ENCODE measurements at regions of chr11 and their contacts with region 1.

Region 1: DNA sequence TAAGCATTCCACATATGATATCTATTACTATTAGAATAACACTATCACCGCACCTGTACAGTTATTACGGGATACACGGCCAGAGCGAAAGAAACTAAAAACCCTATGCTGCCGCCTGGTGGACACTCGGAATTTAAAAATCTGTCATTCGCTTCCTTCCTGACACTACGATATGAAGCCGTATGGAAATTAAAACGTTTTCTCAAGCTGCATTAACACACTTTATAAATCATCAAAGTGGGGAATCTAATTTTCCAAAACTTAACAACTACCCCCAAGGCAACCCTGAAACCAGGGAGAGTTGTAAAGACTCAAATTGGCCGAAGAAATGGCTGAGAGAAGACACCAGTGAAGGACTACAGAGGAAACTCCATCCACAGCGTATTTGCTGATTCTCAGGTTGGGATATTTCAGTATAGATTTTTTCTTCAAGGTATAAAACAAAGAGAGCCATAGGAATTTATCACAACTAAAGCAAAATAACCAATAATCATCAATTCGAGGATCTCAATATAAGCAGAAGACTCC is 1.4 kb downstream of the CCDC73 start:
- DNase-seq: peak; percentile 50 to 69
- H3K4me3 ChIP-seq: no peak overlapping the region
- H3K4me3 Mint-ChIP-seq: no peak overlapping the region
- H3K27ac Mint-ChIP-seq: no peak overlapping the region
- H3K4me1 ChIP-seq: no peaks in the 10 kb centered on the region
- H3K4me1 Mint-ChIP-seq: no peaks in the 10 kb centered on the region
- H3K27me3 ChIP-seq: no peaks in the 10 kb centered on the region
- H3K27me3 Mint-ChIP-seq: peaks cover 4% of the 10 kb centered on the region
- CTCF ChIP-seq: peak; percentile 67 to 78

Region 2: DNA sequence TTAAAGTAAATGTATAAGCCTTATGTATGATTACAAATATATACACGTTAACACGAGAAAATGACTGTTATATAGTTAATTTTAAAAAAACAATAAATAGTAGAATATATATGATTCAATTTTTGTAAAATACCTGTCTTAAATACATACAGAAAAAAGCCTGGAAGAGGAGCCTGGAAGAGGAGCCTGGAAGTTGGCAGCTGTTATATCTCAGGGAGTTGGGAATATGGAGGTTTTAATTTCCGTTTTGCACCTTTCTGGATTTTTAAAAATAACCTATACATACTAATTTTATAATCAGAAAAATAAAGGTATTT is 469.2 kb before region 1 on chr11:
- CTCF ChIA-PET with region 1: no interaction called
- POLR2A ChIA-PET with region 1: no interaction called
- intact Hi-C with region 1: loop called (anchors 1 kb)
- DNase-seq: no peak
- H3K4me3 ChIP-seq: no peak overlapping the region
- H3K4me3 Mint-ChIP-seq: no peak overlapping the region
- H3K27ac Mint-ChIP-seq: no peak overlapping the region
- H3K4me1 ChIP-seq: no peaks in the 10 kb centered on the region
- H3K4me1 Mint-ChIP-seq: no peaks in the 10 kb centered on the region
- H3K27me3 ChIP-seq: no peaks in the 10 kb centered on the region
- H3K27me3 Mint-ChIP-seq: peaks cover 6% of the 10 kb centered on the region
- CTCF ChIP-seq: peak in 1 of 2 experiments; percentile 16

Region 3: GRCh38 chr11:32385998-32386397 is 407.0 kb before region 1 on chr11:
- CTCF ChIA-PET with region 1: no interaction called
- POLR2A ChIA-PET with region 1: no interaction called
- intact Hi-C with region 1: loop called (anchors 5 kb)
- DNase-seq: peak; percentile 54
- H3K4me3 ChIP-seq: no peak overlapping the region
- H3K4me3 Mint-ChIP-seq: no peak overlapping the region
- H3K27ac Mint-ChIP-seq: no peak overlapping the region
- H3K4me1 ChIP-seq: no peaks in the 10 kb centered on the region
- H3K4me1 Mint-ChIP-seq: no peaks in the 10 kb centered on the region
- H3K27me3 ChIP-seq: peaks cover 1% of the 10 kb centered on the region
- H3K27me3 Mint-ChIP-seq: no peaks in the 10 kb centered on the region
- CTCF ChIP-seq: peak; percentile 54 to 84

Region 4: GRCh38 chr11:32583459-32584271 is 209.3 kb before region 1 on chr11 and contains the start of gene EIF3M:
- CTCF ChIA-PET with region 1: no interaction called
- POLR2A ChIA-PET with region 1: no interaction called
- intact Hi-C with region 1: loop called (anchors 10 kb)
- DNase-seq: peak; percentile 97 to 98
- H3K4me3 ChIP-seq: peak within 1 kb of the TSS; percentile 95
- H3K4me3 Mint-ChIP-seq: peak within 1 kb of the TSS; percentile 83
- H3K27ac Mint-ChIP-seq: peak within 1 kb of the TSS; percentile 93
- H3K4me1 ChIP-seq: peaks cover 23% of the 10 kb centered on the region
- H3K4me1 Mint-ChIP-seq: peaks cover 14% of the 10 kb centered on the region
- H3K27me3 ChIP-seq: no peaks in the 10 kb centered on the region
- H3K27me3 Mint-ChIP-seq: no peaks in the 10 kb centered on the region
- CTCF ChIP-seq: no peak
- total RNA-seq, gene EIF3M: 372 and 388 TPM in 2 replicates

Region 5: GRCh38 chr11:32615422-32615821 is 177.6 kb before region 1 on chr11:
- CTCF ChIA-PET with region 1: no interaction called
- POLR2A ChIA-PET with region 1: no interaction called
- intact Hi-C with region 1: loop called (anchors 10 kb)
- DNase-seq: no peak
- H3K4me3 ChIP-seq: no peak overlapping the region
- H3K4me3 Mint-ChIP-seq: no peak overlapping the region
- H3K27ac Mint-ChIP-seq: no peak overlapping the region
- H3K4me1 ChIP-seq: peaks cover 8% of the 10 kb centered on the region; the same call in 1 of the 2 replicates
- H3K4me1 Mint-ChIP-seq: peaks cover 14% of the 10 kb centered on the region
- H3K27me3 ChIP-seq: no peaks in the 10 kb centered on the region
- H3K27me3 Mint-ChIP-seq: no peaks in the 10 kb centered on the region
- CTCF ChIP-seq: peak in 1 of 2 experiments; percentile 29

Region 6: DNA sequence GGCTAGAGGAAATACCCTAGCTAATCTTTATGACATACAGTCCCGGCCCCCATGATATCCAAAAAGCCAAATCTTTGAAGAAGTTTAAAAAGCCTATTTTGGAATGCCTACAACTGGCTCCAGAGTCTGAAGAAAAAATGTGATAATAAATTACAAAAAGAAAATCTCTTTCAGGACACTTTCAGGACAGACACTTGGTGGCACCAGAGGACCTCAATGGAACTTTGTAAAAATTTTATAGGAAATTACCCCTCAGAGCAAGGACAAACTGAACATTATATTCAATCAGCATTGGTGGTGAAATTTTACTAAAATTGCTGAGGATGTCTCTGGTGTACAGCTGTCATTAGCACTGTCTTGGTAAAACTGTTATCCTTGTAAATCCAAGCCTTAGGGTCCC is 79.5 kb before region 1 on chr11:
- CTCF ChIA-PET with region 1: no interaction called
- POLR2A ChIA-PET with region 1: no interaction called
- intact Hi-C with region 1: loop called (anchors 1 kb)
- DNase-seq: peak in 1 of 2 experiments; percentile 17
- H3K4me3 ChIP-seq: no peak overlapping the region
- H3K4me3 Mint-ChIP-seq: no peak overlapping the region
- H3K27ac Mint-ChIP-seq: no peak overlapping the region
- H3K4me1 ChIP-seq: 0 out of 2 replicates have a peak, but pooled peaks cover 11% of the 10 kb centered on the region
- H3K4me1 Mint-ChIP-seq: peaks cover 10% of the 10 kb centered on the region
- H3K27me3 ChIP-seq: no peaks in the 10 kb centered on the region
- H3K27me3 Mint-ChIP-seq: no peaks in the 10 kb centered on the region
- CTCF ChIP-seq: peak; percentile 41 to 48

Region 7: GRCh38 chr11:32751381-32751780 is 41.6 kb before region 1 on chr11:
- CTCF ChIA-PET with region 1: no interaction called
- POLR2A ChIA-PET with region 1: no interaction called
- intact Hi-C with region 1: loop called (anchors 1 kb)
- DNase-seq: no peak
- H3K4me3 ChIP-seq: no peak overlapping the region
- H3K4me3 Mint-ChIP-seq: no peak overlapping the region
- H3K27ac Mint-ChIP-seq: no peak overlapping the region
- H3K4me1 ChIP-seq: no peaks in the 10 kb centered on the region
- H3K4me1 Mint-ChIP-seq: peaks cover 7% of the 10 kb centered on the region
- H3K27me3 ChIP-seq: no peaks in the 10 kb centered on the region
- H3K27me3 Mint-ChIP-seq: peaks cover 11% of the 10 kb centered on the region
- CTCF ChIP-seq: no peak

Region 8: GRCh38 chr11:32775908-32776307 is 17.1 kb before region 1 on chr11:
- CTCF ChIA-PET with region 1: no interaction called
- POLR2A ChIA-PET with region 1: no interaction called
- intact Hi-C with region 1: no loop called
- DNase-seq: no peak
- H3K4me3 ChIP-seq: no peak overlapping the region
- H3K4me3 Mint-ChIP-seq: no peak overlapping the region
- H3K27ac Mint-ChIP-seq: no peak overlapping the region
- H3K4me1 ChIP-seq: no peaks in the 10 kb centered on the region
- H3K4me1 Mint-ChIP-seq: peaks cover 5% of the 10 kb centered on the region
- H3K27me3 ChIP-seq: no peaks in the 10 kb centered on the region
- H3K27me3 Mint-ChIP-seq: peaks cover 5% of the 10 kb centered on the region
- CTCF ChIP-seq: no peak

Measured in Caco-2 (cell line).